Sigmoid colon (tissue), 7 donors: ENCODE measurements at regions of chr13 and their contacts with region 1.

Region 1: GRCh38 chr13:97109841-97110492 is 112.2 kb upstream of the MBNL2 start:
- DNase-seq: peak; percentile 96
- H3K4me3 ChIP-seq: peak overlapping the region in 2 of 4 donors; percentile 20 to 27
- H3K27ac ChIP-seq: peak overlapping the region; percentile 68 to 90 (median 83)
- H3K4me1 ChIP-seq: peaks cover 0 to 69% (median 65%) of the 10 kb centered on the region in 4 donors
- H3K27me3 ChIP-seq: no peaks in the 10 kb centered on the region
- CTCF ChIP-seq: peak; percentile 87 to 95 (median 90)
- EP300 ChIP-seq: peak in 1 of 4 donors; percentile 43
- POLR2A ChIP-seq: no peak

Region 2: GRCh38 chr13:97344265-97345175 is 234.6 kb after region 1 on chr13:
- intact Hi-C with region 1: loop called (anchors 1 kb)
- DNase-seq: peak; percentile 81
- H3K4me3 ChIP-seq: no peak overlapping the region
- H3K27ac ChIP-seq: peak overlapping the region; percentile 50 to 90 (median 72)
- H3K4me1 ChIP-seq: peaks cover 0 to 56% (median 41%) of the 10 kb centered on the region in 4 donors
- H3K27me3 ChIP-seq: no peaks in the 10 kb centered on the region
- CTCF ChIP-seq: peak; percentile 38 to 75 (median 66)
- EP300 ChIP-seq: no peak
- POLR2A ChIP-seq: no peak

Region 3: DNA sequence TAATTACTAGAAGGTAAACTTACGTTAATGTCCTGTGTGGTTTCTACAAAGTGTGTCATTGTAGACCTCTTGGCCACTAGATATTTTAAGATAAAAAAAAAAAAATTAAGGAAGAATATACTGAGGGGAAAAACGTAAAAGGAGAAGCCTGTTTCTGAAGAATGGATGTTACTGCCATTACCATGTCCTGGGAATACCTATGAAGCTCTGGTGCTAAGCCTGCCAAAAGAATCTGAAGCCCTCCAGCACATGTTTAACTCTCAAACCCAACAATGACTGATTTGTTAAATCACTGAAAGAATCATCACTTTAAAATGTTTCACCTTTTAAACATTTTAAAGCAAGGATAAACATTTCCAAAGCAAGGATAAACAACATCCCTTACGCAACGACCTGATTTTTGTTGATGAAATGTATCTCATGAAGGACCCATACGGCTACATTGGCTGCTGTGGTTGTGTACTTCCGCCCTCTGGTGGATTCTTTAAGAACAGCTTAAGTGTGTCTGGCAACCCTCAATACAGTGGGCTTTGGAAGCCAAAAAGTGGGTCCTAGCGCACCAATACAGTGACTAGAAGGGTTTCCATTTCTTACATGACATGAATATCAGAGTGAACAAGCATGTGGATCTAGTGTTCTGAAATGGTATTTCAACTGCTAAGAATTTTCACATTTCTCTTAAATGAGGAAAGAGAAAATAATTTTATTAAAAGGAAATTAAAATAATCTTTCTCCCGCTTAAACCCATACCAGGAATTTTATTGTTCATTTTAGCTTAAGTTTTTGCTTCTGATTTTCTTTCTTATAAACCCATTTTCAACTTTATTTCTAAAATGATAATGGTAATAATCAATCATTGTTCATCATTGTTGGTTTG is 249.5 kb after region 1 on chr13:
- intact Hi-C with region 1: loop called (anchors 1 kb)
- DNase-seq: peak; percentile 84
- H3K4me3 ChIP-seq: no peak overlapping the region
- H3K27ac ChIP-seq: peak overlapping the region; percentile 20 to 73 (median 51)
- H3K4me1 ChIP-seq: peaks cover 0 to 50% (median 22%) of the 10 kb centered on the region in 4 donors
- H3K27me3 ChIP-seq: no peaks in the 10 kb centered on the region
- CTCF ChIP-seq: peak; percentile 78 to 93 (median 89)
- EP300 ChIP-seq: peak in 1 of 4 donors; percentile 22
- POLR2A ChIP-seq: no peak

Region 4: DNA sequence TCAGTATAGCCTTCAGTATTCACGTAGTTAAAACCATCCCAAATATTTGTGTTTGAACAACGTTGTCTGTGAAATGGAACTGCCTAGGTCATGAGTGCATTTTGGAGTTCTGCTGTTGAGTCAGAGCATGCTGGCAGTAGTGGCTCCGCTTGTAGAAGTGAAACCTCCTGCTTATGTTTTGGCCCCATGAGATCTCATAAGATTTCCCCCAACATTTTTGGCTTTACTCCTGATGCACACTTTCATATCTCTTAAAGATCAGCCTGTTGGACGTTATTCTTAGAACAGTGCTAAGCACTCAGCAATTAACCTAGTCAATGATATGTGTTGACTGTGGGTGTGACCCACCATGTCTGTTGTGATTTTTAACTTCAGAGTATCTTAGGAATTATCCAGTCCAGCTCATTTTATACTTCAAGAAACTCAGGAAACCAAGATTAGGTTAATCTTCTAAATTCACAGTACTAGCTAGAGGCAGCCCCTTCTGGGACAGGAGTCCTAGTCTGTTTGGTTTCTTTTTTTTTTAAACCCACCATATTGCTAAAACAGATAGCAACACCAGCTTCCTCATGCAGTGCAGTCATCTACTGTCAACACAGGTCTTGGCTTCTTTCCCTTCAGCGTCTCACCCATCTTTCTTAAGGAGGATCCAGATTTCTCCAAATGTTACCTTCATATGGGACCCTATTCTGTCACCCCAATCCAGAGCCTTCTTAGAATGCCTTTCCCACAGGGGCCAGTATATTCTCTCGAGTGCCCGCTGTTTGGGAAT is 350.2 kb after region 1 on chr13:
- intact Hi-C with region 1: no loop called
- DNase-seq: no peak
- H3K4me3 ChIP-seq: no peak overlapping the region
- H3K27ac ChIP-seq: no peak overlapping the region
- H3K4me1 ChIP-seq: peaks cover 0 to 9% (median 7%) of the 10 kb centered on the region in 4 donors
- H3K27me3 ChIP-seq: no peaks in the 10 kb centered on the region
- CTCF ChIP-seq: no peak
- EP300 ChIP-seq: no peak
- POLR2A ChIP-seq: no peak